ENCODE measurements at regions of chr12 and their contacts with region 1.

Region 1: DNA sequence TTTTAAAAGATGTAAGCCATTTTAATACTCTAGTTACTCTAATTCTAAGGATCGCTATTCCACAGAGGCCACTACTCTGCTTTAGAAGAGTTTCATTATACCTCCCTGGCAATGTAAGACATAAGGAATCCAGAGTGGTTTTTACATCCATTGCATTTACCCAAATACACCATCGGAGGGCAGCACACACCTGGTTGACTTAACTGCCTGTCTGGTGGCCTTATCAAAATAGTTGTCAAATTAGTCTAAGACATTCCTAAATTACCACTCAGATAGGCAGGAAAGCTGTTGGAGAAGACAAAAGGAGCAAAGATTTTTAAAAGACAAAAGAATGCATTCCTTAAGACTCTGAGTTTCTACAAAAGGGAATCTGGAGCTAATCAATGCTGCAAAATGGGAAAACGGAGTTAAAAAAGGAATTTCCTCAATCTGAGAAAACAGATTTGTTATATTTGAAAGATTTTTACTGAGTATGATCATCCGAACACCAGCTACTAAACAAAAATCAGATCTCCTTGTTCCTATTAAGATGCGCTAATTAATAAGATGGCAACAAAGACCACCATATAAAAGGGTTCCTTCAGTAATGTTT is 33.8 kb upstream of the FGD4 start:
- DNase-seq: peak; percentile 60
- H3K4me3 ChIP-seq: no peak overlapping the region
- H3K27ac ChIP-seq: no peak overlapping the region
- H3K4me1 ChIP-seq: peaks cover 0 to 10% (median 2%) of the 10 kb centered on the region in 4 donors
- H3K27me3 ChIP-seq: no peaks in the 10 kb centered on the region
- CTCF ChIP-seq: peak; percentile 70 to 80 (median 73)
- EP300 ChIP-seq: no peak
- POLR2A ChIP-seq: no peak

Region 2: DNA sequence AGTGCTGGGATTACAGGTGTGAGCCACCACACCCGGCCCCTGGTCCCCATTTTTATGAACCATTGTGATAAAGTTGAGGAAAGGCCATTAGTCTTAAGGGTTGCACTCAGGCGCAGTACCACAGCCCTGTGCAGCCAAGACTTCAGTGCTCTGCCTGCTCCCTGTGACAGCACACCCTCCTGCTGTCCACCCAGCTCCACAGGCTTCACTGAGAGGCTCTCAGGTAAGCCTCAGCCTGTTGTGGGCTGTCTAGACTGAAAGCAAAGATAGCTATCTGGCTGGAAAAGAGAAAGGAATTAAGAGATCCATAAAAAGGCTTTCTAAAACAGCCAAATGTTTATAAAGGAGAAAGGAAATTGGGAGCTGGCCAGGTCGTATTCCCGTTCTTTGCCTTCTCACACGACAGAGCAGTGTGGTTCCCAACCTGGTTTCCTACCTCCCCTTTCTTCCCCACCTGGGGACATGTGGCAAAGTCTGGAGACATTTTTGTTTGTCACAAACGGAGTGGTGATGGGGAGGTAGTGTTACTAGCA is 294.4 kb after region 1 on chr12:
- in situ Hi-C with region 1: loop called in 3 of 4 experiments (anchors 10 to 25 kb)
- intact Hi-C with region 1: no loop called
- DNase-seq: no peak
- H3K4me3 ChIP-seq: no peak overlapping the region
- H3K27ac ChIP-seq: peak overlapping the region in 2 of 4 donors; percentile 13 to 24
- H3K4me1 ChIP-seq: peaks cover 0 to 10% (median 5%) of the 10 kb centered on the region in 4 donors
- H3K27me3 ChIP-seq: no peaks in the 10 kb centered on the region
- CTCF ChIP-seq: no peak
- EP300 ChIP-seq: no peak
- POLR2A ChIP-seq: no peak

Region 3: DNA sequence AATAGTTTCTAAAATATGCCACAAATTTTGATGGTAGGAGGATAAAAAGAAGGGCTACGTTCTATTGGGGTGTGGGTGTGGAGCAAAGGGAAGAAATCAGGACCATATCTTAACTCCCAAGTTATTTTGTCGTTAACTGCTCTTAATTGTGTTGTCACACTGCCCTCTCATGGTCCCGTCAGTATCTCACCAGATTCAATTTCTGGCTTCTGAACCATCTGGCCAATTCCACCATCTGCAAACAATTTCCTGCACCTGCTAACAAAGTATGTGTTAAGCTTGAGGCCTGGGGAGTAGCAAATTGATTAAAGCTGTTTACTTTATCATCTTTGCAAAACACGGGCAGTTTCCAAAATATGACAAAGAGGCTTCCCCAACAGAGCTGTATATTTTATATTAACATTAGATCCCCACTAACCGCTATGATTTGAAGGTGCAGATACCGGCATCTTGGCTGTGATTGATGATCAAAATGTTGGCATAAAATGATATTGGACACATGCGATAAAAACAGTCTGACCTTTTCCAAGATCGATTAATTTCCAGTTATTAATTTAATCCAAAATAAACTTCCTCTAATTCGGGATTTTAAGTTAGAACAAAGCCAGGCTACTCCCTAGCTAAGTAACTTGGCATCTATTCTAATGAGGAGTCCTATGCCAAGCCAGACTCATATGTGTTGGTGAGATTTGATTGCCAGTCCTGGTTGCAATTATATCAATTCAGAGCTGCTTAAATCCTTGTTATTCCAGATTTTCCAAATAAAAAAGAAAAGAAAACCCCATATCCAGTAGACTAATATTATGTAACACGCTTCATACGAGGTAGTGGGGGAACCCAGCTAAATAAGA is 306.6 kb after region 1 on chr12:
- in situ Hi-C with region 1: loop called in 3 of 4 experiments (anchors 10 to 25 kb)
- intact Hi-C with region 1: no loop called
- DNase-seq: peak; percentile 36
- H3K4me3 ChIP-seq: no peak overlapping the region
- H3K27ac ChIP-seq: no peak overlapping the region
- H3K4me1 ChIP-seq: no peaks in the 10 kb centered on the region
- H3K27me3 ChIP-seq: no peaks in the 10 kb centered on the region
- CTCF ChIP-seq: peak in 4 of 5 experiments; percentile 31 to 47 (median 45)
- EP300 ChIP-seq: no peak
- POLR2A ChIP-seq: no peak

Region 4: GRCh38 chr12:32679091-32679919 is 313.7 kb after region 1 on chr12 and contains the start of gene DNM1L:
- in situ Hi-C with region 1: loop called in 3 of 4 experiments (anchors 10 to 25 kb)
- intact Hi-C with region 1: no loop called
- DNase-seq: peak; percentile 95
- H3K4me3 ChIP-seq: peak within 1 kb of the TSS; percentile 50 to 97 (median 84)
- H3K27ac ChIP-seq: peak within 1 kb of the TSS; percentile 96 to 99 (median 98)
- H3K4me1 ChIP-seq: peaks cover 7 to 19% (median 14%) of the 10 kb centered on the region in 4 donors
- H3K27me3 ChIP-seq: no peaks in the 10 kb centered on the region
- CTCF ChIP-seq: peak in 3 of 5 experiments; percentile 14 to 24 (median 17)
- EP300 ChIP-seq: no peak
- POLR2A ChIP-seq: peak; percentile 90
- total RNA-seq, gene DNM1L: 41.2 to 61.3 (median 44.2) TPM

Measured in transverse colon (tissue), 4 donors.